ENCODE measurements at regions of chr3 and their contacts with region 1.

Region 1: DNA sequence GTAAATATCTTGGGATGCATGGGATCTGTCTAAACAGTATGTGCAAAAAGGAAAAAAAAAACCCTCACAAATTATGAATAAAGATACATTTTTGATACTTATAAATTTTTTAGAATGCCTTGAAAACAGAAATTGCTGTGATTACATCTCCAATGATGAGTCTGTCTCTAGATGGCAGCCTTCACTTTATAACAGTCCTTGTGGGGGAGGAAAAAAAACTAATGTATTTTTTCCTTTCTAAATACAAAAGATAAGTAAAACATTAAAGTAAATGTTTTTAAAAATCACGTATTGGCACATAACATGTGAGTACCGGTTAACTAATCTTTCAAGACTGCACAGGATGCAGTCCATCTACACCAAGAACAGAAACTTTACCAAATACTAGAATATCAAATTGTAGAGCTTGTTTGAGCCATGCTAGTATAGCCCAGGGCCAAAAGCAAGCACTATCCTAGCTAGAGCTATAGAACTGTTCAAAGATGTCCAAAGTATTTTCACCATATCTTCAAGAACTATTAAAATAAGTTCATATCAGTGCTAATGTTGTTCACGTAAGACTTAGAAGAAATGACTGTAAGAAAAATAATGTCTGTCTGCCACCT is 206.4 kb downstream of the STAG1 start:
- DNase-seq: no peak
- ATAC-seq: no peak
- H3K4me3 ChIP-seq: no peak overlapping the region
- H3K27ac ChIP-seq: no peak overlapping the region
- H3K4me1 ChIP-seq: no peaks in the 10 kb centered on the region
- H3K27me3 ChIP-seq: no peaks in the 10 kb centered on the region
- CTCF ChIP-seq: peak in 2 of 3 experiments; percentile 11 to 37; a peak in 2 of 6 replicates
- EP300 ChIP-seq: no peak
- POLR2A ChIP-seq: no peak
- RAD21 ChIP-seq: peak; percentile 51

Region 2: DNA sequence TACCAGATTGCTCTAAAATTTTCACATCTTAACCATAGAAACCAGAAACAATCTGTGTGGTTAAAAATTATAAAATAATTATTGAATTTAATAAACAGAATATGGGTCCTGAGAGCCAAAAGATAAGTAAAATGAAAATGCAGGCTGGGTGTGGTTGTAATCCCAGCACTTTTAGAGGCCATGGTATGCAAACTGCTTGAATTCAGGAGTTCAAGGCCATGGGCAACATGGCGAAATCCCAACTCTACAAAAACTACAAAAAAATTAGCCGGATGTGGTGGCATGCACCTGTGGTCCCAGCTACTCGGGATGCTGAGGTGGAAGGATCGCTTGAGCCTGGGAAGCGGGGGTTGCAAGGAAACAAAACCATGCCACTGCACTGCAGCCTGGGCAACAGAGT is 29.7 kb before region 1 on chr3:
- CTCF ChIA-PET with region 1: no interaction called
- POLR2A ChIA-PET with region 1: no interaction called
- RAD21 ChIA-PET with region 1: no interaction called
- SMC1A ChIA-PET with region 1: no interaction called
- in situ Hi-C with region 1: no loop called
- intact Hi-C with region 1: no loop called
- DNase-seq: no peak
- ATAC-seq: no peak
- H3K4me3 ChIP-seq: no peak overlapping the region
- H3K27ac ChIP-seq: no peak overlapping the region
- H3K4me1 ChIP-seq: no peaks in the 10 kb centered on the region
- H3K27me3 ChIP-seq: no peaks in the 10 kb centered on the region
- CTCF ChIP-seq: no peak
- EP300 ChIP-seq: no peak
- POLR2A ChIP-seq: no peak
- RAD21 ChIP-seq: no peak

Region 3: DNA sequence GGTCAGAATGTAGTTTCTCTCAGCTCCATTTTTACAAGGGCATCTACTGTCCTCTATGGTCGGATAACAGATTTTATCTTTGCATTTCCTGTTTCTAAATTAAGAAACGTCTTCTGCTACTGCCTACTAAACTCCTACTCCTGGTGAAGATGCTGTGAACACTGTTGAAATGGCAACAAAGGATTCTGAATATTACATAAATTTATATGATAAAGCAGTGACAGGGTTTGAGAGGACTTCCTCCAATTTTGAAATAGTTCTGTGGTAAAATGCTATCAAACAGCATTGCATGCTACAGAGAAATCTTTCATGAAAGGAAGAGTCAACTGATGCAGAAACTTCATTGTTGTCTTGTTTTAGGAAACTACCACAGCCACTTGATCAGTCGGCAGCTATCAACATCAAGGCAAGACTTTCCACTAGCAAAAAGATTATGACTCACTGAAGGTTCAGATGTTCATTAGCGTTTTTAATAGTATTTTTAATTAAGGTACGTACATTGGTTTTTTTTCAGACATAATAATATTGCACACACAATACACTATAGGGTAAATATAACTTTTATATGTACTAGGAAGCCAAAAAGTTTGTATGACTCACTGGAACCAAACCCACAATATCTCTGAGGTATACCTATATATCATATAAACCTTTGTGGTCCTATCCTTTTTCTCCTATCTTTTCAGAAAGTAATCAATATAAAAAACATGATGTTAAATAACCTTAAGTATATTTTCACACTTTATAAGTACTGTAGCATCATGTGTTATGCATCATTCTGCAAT is 50.3 kb after region 1 on chr3:
- CTCF ChIA-PET with region 1: interaction called, 3 read pairs
- POLR2A ChIA-PET with region 1: interaction called, 3 read pairs
- RAD21 ChIA-PET with region 1: no interaction called
- SMC1A ChIA-PET with region 1: interaction called, 10 read pairs
- in situ Hi-C with region 1: no loop called
- intact Hi-C with region 1: no loop called
- DNase-seq: no peak
- ATAC-seq: peak; percentile 56; the same call in 2 of the 3 replicates
- H3K4me3 ChIP-seq: no peak overlapping the region
- H3K27ac ChIP-seq: no peak overlapping the region
- H3K4me1 ChIP-seq: no peaks in the 10 kb centered on the region
- H3K27me3 ChIP-seq: no peaks in the 10 kb centered on the region
- CTCF ChIP-seq: no peak
- EP300 ChIP-seq: no peak
- POLR2A ChIP-seq: no peak
- RAD21 ChIP-seq: 0 out of 2 replicates have a peak, but pooled peaks have one; percentile 11

Measured in GM12878 (cell line).